AG04449 (cell line): ENCODE measurements at regions of chrX and their contacts with region 1.

Region 1: GRCh38 chrX:30713061-30713525 is 59.9 kb downstream of the GK start:
- DNase-seq: peak; percentile 16
- H3K4me3 ChIP-seq: no peak overlapping the region
- CTCF ChIP-seq: peak; percentile 67

Region 2: DNA sequence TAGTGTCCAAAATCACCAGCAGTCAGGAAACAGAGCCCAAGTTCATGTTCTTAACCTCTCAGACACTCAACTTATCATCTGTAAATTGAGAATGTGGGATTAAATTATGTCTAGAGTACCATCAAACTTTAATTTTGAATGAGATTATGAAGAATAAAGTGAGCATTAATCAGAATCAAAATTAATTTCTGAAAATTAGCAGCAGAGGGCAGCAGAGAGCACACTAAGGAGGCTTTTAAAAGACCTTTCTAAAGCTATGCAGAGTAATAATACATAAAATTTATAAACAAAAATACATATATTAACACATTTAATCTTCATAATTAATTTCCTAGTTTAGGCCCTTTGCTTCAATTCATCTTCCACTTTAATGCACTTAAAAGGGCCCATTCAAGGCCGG is 142.6 kb before region 1 on chrX:
- CTCF ChIA-PET with region 1: interaction called, 12 read pairs
- POLR2A ChIA-PET with region 1: no interaction called
- DNase-seq: no peak
- H3K4me3 ChIP-seq: no peak overlapping the region
- CTCF ChIP-seq: no peak

Region 3: GRCh38 chrX:30635630-30636029 is 77.5 kb before region 1 on chrX:
- CTCF ChIA-PET with region 1: interaction called, 14 read pairs
- POLR2A ChIA-PET with region 1: no interaction called
- DNase-seq: no peak
- H3K4me3 ChIP-seq: no peak overlapping the region
- CTCF ChIP-seq: peak; percentile 9

Region 4: DNA sequence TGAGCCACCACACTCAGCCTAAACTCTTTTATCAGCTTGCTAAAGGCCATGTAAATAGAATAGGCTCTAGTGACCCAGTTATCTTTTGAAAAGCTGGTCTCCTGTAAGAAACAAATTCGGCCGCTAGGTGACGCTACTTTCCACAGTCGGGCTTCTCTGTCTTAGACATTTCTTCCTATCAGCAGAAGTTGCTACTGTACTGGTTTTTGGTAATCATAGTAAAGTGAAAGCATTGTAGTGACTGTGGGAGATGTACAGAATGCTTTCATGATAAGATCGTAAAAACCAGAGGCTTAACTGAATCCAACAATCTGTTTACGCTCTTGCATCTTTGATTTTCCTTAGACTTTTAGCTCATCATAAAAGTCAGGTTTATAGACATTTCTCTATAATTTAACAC is 22.7 kb after region 1 on chrX:
- CTCF ChIA-PET with region 1: interaction called, 11 read pairs
- POLR2A ChIA-PET with region 1: no interaction called
- DNase-seq: no peak
- H3K4me3 ChIP-seq: no peak overlapping the region
- CTCF ChIP-seq: peak; percentile 53

Region 5: GRCh38 chrX:31061091-31061490 is 348.0 kb after region 1 on chrX:
- CTCF ChIA-PET with region 1: no interaction called
- POLR2A ChIA-PET with region 1: no interaction called
- DNase-seq: no peak
- H3K4me3 ChIP-seq: no peak overlapping the region
- CTCF ChIP-seq: no peak